ENCODE measurements at regions of chr5 and their contacts with region 1.

Region 1: DNA sequence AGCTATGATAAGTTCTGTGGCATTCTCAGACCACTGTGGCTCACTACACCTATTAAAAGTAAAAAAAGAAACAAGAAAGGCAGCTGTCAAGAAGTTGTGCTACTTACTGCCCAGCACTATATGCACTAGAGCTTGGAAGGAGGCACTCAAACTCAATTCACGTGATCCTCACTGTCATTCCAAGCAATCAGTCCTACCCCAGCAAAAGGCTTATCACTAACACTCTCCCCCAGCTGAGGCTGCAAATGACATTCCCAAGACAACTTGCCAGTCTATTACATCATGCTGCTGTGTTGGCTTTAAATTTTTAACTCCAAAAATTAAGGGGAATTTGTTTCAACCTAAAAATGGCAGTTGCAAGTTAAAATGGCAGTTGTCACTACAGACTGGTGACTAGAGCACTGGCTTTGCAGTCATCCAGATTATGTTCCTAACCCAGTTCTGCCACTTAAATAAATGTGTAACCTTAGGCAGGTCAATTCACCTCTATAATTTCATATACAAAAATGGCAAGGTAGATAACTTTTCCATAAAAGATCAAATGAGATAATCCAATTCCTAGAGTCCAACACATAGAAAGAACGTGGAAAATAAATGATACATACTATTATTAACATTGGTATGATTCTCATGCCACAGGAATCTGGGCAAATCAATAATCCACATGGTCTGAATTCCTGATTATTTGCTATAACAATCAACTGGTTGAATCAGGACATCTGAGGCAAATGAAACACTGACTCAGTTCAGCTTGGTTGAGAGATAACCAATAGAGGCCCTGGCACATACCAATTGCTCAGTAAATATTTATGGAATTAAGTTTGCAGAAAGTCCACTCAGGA is 52.4 kb downstream of the FBXW11 start:
- DNase-seq: no peak
- ATAC-seq: no peak
- H3K4me3 ChIP-seq: no peak overlapping the region
- H3K4me3 Mint-ChIP-seq: no peak overlapping the region
- H3K27ac ChIP-seq: no peak overlapping the region
- H3K27ac Mint-ChIP-seq: no peak overlapping the region
- H3K4me1 ChIP-seq: peaks cover 24 to 44% of the 10 kb centered on the region in 2 donors
- H3K4me1 Mint-ChIP-seq: peaks cover 69% of the 10 kb centered on the region
- H3K27me3 ChIP-seq: no peaks in the 10 kb centered on the region
- H3K27me3 Mint-ChIP-seq: no peaks in the 10 kb centered on the region
- CTCF ChIP-seq: no peak

Region 2: DNA sequence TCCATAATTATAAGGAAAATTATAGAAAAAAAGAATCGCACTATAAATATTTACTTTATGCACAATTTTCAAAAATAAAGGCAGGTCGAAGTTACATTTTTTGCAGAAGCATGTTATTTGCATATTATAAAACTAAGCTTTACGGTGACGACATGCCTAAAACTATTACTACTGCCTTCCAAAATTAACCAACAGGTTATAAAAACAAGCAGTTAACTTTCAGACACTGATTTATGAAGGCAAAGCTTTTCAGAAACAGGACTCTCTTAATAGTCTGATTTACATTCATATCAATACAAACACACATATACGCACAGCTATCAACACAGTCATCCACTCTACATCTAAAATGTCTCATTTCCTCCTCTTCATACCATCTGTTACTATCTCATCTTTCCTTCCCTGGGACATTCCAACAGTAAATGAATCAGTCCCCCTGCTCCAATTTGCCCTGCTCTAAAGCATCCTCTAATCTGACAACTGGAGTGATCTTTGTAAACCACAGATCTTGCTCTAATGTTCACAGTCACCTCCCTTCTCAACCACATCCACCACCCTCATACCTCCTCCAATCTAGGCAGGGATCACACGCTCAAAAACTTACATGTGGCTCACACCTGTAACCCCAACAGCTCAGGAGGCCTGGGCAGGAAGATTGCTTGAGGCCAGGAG is 30.8 kb after region 1 on chr5:
- CTCF ChIA-PET with region 1: no interaction called
- POLR2A ChIA-PET with region 1: no interaction called
- intact Hi-C with region 1: loop called (anchors 5 kb)
- DNase-seq: no peak
- ATAC-seq: no peak
- H3K4me3 ChIP-seq: peak overlapping the region in 1 of 5 experiments; percentile 1
- H3K4me3 Mint-ChIP-seq: peak overlapping the region; percentile 44
- H3K27ac ChIP-seq: peak overlapping the region in 1 of 2 donors; percentile 51
- H3K27ac Mint-ChIP-seq: peak overlapping the region; percentile 64
- H3K4me1 ChIP-seq: peaks cover 52 to 64% of the 10 kb centered on the region in 2 donors
- H3K4me1 Mint-ChIP-seq: peaks cover 67% of the 10 kb centered on the region
- H3K27me3 ChIP-seq: no peaks in the 10 kb centered on the region
- H3K27me3 Mint-ChIP-seq: no peaks in the 10 kb centered on the region
- CTCF ChIP-seq: no peak